ENCODE measurements at regions of chr4 and their contacts with region 1.

Region 1: DNA sequence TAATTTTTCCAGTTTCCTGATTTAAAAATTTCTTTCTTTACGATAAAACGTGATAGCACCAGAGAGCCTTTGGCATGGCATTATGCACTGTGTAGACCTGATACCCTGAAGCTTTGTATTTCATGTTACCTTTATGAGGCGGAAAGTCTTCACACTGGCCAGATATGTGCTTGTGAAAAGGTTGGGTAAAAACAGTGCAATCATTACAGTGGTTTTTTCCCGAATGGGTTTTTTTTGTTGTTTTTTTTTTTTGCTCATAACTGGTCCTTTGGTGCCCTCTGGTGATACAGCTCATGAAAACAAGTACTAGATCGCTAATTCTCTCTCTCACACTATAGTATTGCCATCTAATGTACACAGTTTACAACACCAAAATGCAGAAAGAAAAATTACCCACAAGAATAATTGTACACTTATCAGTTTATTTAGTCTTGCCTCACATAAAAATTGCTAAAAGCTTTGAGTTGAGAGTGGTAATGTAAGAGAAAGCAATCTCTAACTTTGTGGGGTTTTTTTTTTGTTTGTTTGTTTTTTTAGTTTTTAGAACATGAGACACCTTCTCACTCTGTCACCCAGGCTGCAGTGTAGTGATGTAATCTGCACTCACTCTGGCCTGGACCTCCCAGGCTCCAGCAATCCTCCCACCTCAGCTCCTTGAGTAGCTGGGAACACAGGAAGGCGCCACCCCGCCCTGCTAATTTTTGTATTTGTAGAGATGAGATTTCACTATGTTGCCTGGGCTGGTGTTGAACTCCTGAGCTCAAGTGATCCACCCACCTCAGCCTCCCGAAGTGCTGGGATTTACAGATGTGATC is 21.3 kb downstream of the SPCS3 start:
- DNase-seq: peak; percentile 45 to 49
- H3K4me3 ChIP-seq: no peak overlapping the region
- H3K4me1 ChIP-seq: peaks cover 9% of the 10 kb centered on the region
- H3K27me3 ChIP-seq: no peaks in the 10 kb centered on the region

Region 2: GRCh38 chr4:175560604-175561003 is 780.5 kb before region 1 on chr4:
- in situ Hi-C with region 1: loop called (anchors 5 kb)
- DNase-seq: peak in 1 of 2 experiments; percentile 47
- H3K4me3 ChIP-seq: no peak overlapping the region
- H3K4me1 ChIP-seq: no peaks in the 10 kb centered on the region
- H3K27me3 ChIP-seq: peaks cover 3% of the 10 kb centered on the region; the same call in 1 of the 2 replicates

Region 3: DNA sequence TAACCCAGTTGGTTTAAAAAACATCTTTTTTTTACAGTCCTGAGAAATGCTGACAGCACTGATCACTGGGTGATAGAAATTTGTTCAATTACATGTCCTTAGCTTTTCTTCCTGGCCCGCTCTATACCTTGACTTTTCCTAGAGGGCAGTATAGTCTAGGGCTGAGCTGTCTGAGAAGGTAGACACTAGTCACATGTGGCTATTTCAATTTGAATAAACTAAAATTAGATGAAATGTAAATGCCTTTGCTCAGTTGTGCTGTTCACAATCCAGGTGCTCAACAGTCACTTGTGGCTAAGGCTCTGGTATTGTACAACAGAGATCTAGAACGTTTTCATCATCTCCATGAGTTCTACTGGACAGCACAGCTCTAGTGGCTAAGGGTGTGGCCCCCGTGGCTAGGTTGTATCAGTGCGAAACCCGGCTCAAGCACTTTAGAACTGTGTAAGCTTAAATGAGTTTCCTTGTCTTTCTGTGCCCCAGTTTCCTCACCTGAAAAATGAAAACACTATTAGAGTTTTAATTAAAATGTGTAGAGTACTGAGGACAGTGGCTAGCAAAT is 387.0 kb before region 1 on chr4:
- in situ Hi-C with region 1: loop called (anchors 25 kb)
- DNase-seq: peak; percentile 35 to 59
- H3K4me3 ChIP-seq: no peak overlapping the region
- H3K4me1 ChIP-seq: no peaks in the 10 kb centered on the region
- H3K27me3 ChIP-seq: no peaks in the 10 kb centered on the region

Region 4: GRCh38 chr4:176034499-176034898 is 306.6 kb before region 1 on chr4:
- in situ Hi-C with region 1: loop called (anchors 25 kb)
- DNase-seq: peak; percentile 20 to 21
- H3K4me3 ChIP-seq: no peak overlapping the region
- H3K4me1 ChIP-seq: no peaks in the 10 kb centered on the region
- H3K27me3 ChIP-seq: no peaks in the 10 kb centered on the region

Region 5: GRCh38 chr4:176150356-176150682 is 190.8 kb before region 1 on chr4:
- in situ Hi-C with region 1: loop called (anchors 5 kb)
- DNase-seq: no peak
- H3K4me3 ChIP-seq: no peak overlapping the region
- H3K4me1 ChIP-seq: no peaks in the 10 kb centered on the region
- H3K27me3 ChIP-seq: no peaks in the 10 kb centered on the region

Region 6: GRCh38 chr4:176690716-176691115 is 349.6 kb after region 1 on chr4:
- in situ Hi-C with region 1: no loop called
- DNase-seq: no peak
- H3K4me3 ChIP-seq: no peak overlapping the region
- H3K4me1 ChIP-seq: no peaks in the 10 kb centered on the region
- H3K27me3 ChIP-seq: no peaks in the 10 kb centered on the region

Region 7: DNA sequence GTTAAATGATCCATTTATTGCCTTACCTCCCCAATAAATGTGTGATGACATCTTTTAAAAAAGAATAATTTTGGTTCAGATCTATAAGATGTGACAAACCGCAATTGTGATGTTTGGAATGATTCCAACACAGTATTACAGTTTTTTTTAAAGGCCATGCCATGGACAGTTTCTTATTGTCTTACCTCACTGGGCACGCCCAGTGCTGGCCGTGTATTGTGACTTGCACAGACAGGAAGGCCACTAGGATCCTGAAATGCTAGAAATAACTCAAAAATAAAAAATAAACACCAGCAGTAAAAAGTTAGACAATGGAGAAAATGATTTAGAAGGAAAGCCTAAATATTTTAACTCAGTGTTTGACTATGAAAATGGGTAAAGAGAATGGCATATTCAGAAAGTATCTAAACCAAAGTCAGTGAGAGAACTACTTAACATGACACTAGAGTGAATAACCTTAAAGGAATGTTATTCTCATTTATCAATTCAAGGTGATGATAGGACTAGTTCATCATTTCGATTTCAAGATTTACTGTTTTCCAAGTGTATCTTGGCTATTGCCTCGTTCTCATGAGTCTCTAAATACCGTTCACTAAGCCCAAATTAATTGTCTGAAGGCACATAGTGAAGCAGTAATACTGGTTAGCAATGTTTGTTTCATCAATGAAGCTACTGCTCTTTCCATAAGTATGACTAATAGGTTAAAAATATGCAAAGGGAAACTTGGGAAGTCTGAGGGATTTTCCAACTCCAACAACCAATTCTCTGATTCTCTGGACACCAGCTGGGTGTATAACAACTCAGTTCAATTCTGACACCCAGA is 497.7 kb after region 1 on chr4:
- in situ Hi-C with region 1: no loop called
- DNase-seq: no peak
- H3K4me3 ChIP-seq: no peak overlapping the region
- H3K4me1 ChIP-seq: peaks cover 11% of the 10 kb centered on the region
- H3K27me3 ChIP-seq: no peaks in the 10 kb centered on the region

Measured in HAP-1 (cell line).